Gastrocnemius medialis (tissue), 4 donors: ENCODE measurements at regions of chr13 and their contacts with region 1.

Region 1: GRCh38 chr13:38914070-38914469 is 76.6 kb downstream of the STOML3 start:
- DNase-seq: no peak
- ATAC-seq: no peak
- H3K4me3 ChIP-seq: no peak overlapping the region
- H3K27ac ChIP-seq: no peak overlapping the region
- H3K4me1 ChIP-seq: no peaks in the 10 kb centered on the region
- H3K27me3 ChIP-seq: no peaks in the 10 kb centered on the region
- CTCF ChIP-seq: no peak
- POLR2A ChIP-seq: no peak

Region 2: GRCh38 chr13:38755793-38756192 is 158.3 kb before region 1 on chr13:
- in situ Hi-C with region 1: no loop called
- intact Hi-C with region 1: no loop called
- DNase-seq: no peak
- ATAC-seq: no peak
- H3K4me3 ChIP-seq: no peak overlapping the region
- H3K27ac ChIP-seq: no peak overlapping the region
- H3K4me1 ChIP-seq: peaks cover 8 to 12% of the 10 kb centered on the region in 2 donors
- H3K27me3 ChIP-seq: no peaks in the 10 kb centered on the region
- CTCF ChIP-seq: no peak
- POLR2A ChIP-seq: no peak

Region 3: DNA sequence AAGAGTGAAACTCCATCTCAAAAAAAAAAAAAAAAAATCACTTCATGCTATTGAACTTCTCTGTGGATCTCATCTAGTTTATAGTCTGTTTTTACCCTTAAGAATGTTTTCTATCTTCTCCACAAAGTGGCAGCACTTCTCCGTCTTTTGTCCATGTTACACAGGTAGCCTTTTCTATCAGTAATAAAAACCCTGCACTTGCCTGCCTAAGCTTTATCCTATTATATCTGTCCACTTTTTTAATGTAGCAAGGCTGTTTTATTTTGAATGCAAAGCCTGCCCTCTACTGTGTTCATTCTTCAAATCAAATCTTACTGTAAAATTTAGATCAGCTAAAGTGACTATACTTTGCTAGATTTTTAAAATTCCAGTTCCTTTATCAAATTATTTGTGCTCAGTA is 47.4 kb before region 1 on chr13:
- in situ Hi-C with region 1: no loop called
- intact Hi-C with region 1: loop called (anchors 2 kb)
- DNase-seq: no peak
- ATAC-seq: no peak
- H3K4me3 ChIP-seq: no peak overlapping the region
- H3K27ac ChIP-seq: no peak overlapping the region
- H3K4me1 ChIP-seq: peaks cover 9 to 11% of the 10 kb centered on the region in 2 donors
- H3K27me3 ChIP-seq: no peaks in the 10 kb centered on the region
- CTCF ChIP-seq: no peak
- POLR2A ChIP-seq: no peak